CD8-positive, alpha-beta T cell (primary cell): ENCODE measurements at regions of chr11 and their contacts with region 1.

Region 1: DNA sequence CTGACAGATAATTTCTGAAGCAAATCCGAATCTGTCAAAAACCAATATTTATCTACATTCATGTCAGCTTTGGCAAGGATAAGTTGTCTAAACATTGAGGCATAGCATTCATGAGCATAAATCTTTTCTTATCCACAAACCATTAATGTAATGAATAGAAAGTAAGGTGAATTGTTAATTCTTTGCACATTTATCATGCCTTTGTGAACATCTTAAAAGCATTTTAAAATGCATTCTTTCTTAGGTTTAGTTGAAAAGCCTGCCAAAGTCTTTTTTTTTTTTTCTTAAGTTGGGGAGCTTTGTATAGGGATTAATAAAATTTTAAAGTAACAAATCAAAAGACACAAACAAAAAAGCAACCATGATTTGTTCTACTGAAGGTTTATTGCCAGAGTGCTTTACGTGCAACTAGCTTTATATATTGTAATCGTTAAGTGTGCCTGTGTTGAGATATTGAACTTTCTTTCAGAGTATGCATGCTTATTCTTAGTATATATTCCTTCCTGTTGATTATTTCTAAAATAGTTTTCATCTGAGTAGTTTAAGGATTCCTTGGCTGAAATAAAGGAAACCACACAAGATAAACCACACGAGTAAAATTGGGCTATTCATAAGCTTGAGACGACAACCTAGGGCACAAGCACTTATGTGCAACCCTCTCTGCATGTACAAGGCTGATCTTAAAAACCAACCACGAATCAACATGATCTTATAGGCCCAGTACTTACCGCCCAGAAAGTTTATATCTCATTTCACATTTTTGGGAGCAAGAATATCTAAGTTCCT is 1110.9 kb upstream of the CNTN5 start:
- DNase-seq: no peak
- ATAC-seq: no peak
- H3K4me3 ChIP-seq: no peak overlapping the region
- H3K4me3 Mint-ChIP-seq: no peak overlapping the region
- H3K27ac ChIP-seq: no peak overlapping the region
- H3K27ac Mint-ChIP-seq: no peak overlapping the region
- H3K4me1 ChIP-seq: no peaks in the 10 kb centered on the region
- H3K4me1 Mint-ChIP-seq: no peaks in the 10 kb centered on the region
- H3K27me3 ChIP-seq: no peaks in the 10 kb centered on the region
- H3K27me3 Mint-ChIP-seq: no peaks in the 10 kb centered on the region
- CTCF ChIP-seq: no peak

Region 2: DNA sequence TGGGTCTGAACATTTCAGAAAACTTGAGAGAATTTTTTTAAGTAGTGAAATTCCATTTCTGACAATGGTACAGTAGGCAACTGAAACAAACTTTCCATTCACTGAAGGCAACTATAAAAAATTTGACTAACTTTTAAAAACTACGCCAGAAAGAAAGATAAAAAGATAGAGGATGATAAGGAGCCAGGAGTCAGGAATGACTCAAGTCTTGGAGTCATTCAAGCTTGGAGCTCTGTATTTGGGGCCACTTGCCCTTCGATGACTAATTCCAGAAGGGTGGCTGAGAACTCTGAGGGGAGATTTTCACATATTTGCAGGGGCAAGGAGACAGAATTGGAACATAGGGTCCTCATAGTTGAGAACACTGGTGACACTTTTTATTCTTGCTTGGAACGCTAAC is 27.7 kb after region 1 on chr11:
- CTCF ChIA-PET with region 1: no interaction called
- POLR2A ChIA-PET with region 1: no interaction called
- intact Hi-C with region 1: loop called in 1 of 2 experiments (anchors 1 kb)
- DNase-seq: no peak
- ATAC-seq: no peak
- H3K4me3 ChIP-seq: no peak overlapping the region
- H3K4me3 Mint-ChIP-seq: no peak overlapping the region
- H3K27ac ChIP-seq: no peak overlapping the region
- H3K27ac Mint-ChIP-seq: no peak overlapping the region
- H3K4me1 ChIP-seq: no peaks in the 10 kb centered on the region
- H3K4me1 Mint-ChIP-seq: no peaks in the 10 kb centered on the region
- H3K27me3 ChIP-seq: no peaks in the 10 kb centered on the region
- H3K27me3 Mint-ChIP-seq: no peaks in the 10 kb centered on the region
- CTCF ChIP-seq: no peak

Region 3: GRCh38 chr11:98069861-98070260 is 160.1 kb after region 1 on chr11:
- CTCF ChIA-PET with region 1: no interaction called
- POLR2A ChIA-PET with region 1: no interaction called
- intact Hi-C with region 1: no loop called
- DNase-seq: no peak
- ATAC-seq: no peak
- H3K4me3 ChIP-seq: no peak overlapping the region
- H3K4me3 Mint-ChIP-seq: no peak overlapping the region
- H3K27ac ChIP-seq: no peak overlapping the region
- H3K27ac Mint-ChIP-seq: no peak overlapping the region
- H3K4me1 ChIP-seq: no peaks in the 10 kb centered on the region
- H3K4me1 Mint-ChIP-seq: no peaks in the 10 kb centered on the region
- H3K27me3 ChIP-seq: no peaks in the 10 kb centered on the region
- H3K27me3 Mint-ChIP-seq: no peaks in the 10 kb centered on the region
- CTCF ChIP-seq: no peak